Mammary epithelial cell (primary cell): ENCODE measurements at regions of chr18 and their contacts with region 1.

Region 1: GRCh38 chr18:4544134-4544533 is 89.0 kb upstream of the DLGAP1 start:
- DNase-seq: no peak
- H3K4me3 ChIP-seq: no peak overlapping the region
- H3K27ac ChIP-seq: no peak overlapping the region
- H3K4me1 ChIP-seq: no peaks in the 10 kb centered on the region
- H3K27me3 ChIP-seq: no peaks in the 10 kb centered on the region
- CTCF ChIP-seq: no peak

Region 2: DNA sequence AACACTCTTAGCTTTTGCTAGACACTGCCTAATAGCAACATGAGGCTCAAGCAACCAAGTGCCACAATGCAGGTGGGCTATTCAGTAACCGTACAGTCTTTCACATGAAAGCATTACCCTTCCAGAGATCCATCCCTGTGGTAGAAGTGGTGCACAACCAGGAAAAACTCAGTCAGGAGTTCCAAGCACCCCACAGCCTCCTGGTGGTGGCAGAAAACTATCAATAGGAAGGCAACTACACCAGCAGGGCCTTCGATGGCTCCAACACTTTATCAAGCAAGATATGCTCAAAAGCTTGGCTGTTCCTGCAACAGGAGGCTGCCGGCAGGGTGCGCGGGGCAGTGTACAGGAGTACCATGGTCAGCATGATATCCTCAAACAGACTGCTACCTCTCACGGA is 87.1 kb after region 1 on chr18:
- CTCF ChIA-PET with region 1: no interaction called
- dilution Hi-C with region 1: no loop called
- in situ Hi-C with region 1: no loop called
- intact Hi-C with region 1: loop called (anchors 10 kb)
- DNase-seq: no peak
- H3K4me3 ChIP-seq: no peak overlapping the region
- H3K27ac ChIP-seq: no peak overlapping the region
- H3K4me1 ChIP-seq: no peaks in the 10 kb centered on the region
- H3K27me3 ChIP-seq: no peaks in the 10 kb centered on the region
- CTCF ChIP-seq: no peak

Region 3: DNA sequence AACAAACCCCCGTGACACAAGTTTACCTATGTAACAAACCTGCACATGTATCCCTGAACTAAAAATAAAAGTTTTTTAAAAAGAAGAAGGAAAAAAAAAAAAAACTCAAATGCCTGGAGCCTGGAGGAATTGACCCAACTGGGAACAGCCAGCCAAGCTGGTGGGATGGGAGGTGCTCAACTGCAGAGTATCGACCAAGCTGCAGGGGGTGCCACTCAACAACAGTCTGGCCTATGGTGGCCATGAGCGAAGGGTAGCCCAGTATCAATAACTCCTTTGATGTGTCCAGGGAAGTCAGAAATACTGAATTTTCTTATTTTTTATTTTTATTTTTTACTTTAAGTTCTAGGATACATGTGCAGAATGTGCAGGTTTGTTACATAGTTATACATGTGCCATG is 221.3 kb after region 1 on chr18:
- CTCF ChIA-PET with region 1: interaction called, 10 read pairs
- dilution Hi-C with region 1: no loop called
- in situ Hi-C with region 1: no loop called
- intact Hi-C with region 1: no loop called
- DNase-seq: no peak
- H3K4me3 ChIP-seq: no peak overlapping the region
- H3K27ac ChIP-seq: no peak overlapping the region
- H3K4me1 ChIP-seq: no peaks in the 10 kb centered on the region
- H3K27me3 ChIP-seq: no peaks in the 10 kb centered on the region
- CTCF ChIP-seq: no peak